ENCODE measurements at regions of chr9 and their contacts with region 1.

Region 1: GRCh38 chr9:71806901-71807307 is 38.6 kb upstream of the CEMIP2 start:
- DNase-seq: no peak
- H3K4me3 ChIP-seq: no peak overlapping the region
- H3K27me3 ChIP-seq: no peaks in the 10 kb centered on the region
- CTCF ChIP-seq: peak; percentile 91

Region 2: DNA sequence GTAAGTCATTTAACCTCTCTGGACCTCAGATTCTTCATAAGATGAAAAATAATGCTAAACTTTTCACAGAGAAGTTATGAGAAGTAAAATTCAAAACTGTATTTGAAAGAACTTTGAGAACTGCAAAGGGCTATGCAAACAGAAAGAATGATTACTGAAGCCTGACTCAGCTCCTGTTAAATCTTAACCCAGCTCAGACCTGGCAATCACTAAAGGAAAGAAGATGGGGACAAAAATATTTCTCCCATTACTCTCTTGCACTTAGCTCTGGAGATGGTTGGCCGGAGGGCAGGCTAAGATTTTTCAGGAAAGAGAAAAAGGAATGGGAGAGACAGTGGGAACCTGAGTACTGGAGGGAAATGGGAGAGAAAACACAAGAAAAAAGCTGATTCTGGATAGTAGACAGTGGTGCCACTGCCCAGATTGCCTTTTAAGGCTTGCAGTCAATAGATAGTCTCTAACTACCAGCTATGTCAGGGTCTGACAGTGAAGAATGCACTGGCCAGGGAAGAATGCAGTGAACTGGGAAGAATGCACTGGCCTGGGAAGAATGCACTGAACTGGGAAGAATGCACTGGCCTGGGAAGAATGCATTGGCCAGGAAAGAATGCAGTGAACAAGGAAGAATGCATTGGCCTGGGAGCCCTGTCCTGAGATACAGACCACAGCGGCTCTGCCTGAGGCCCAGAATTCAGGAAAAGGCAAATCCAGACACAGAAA is 13.4 kb before region 1 on chr9:
- CTCF ChIA-PET with region 1: interaction called, 15 read pairs
- POLR2A ChIA-PET with region 1: no interaction called
- DNase-seq: peak; percentile 13
- H3K4me3 ChIP-seq: no peak overlapping the region
- H3K27me3 ChIP-seq: no peaks in the 10 kb centered on the region
- CTCF ChIP-seq: no peak

Region 3: GRCh38 chr9:72029986-72030385 is 223.1 kb after region 1 on chr9:
- CTCF ChIA-PET with region 1: interaction called, 97 read pairs
- POLR2A ChIA-PET with region 1: no interaction called
- DNase-seq: no peak
- H3K4me3 ChIP-seq: no peak overlapping the region
- H3K27me3 ChIP-seq: no peaks in the 10 kb centered on the region
- CTCF ChIP-seq: no peak